CD4-positive, alpha-beta memory T cell (primary cell): ENCODE measurements at regions of chr11 and their contacts with region 1.

Region 1: GRCh38 chr11:72141066-72141465 is 5.5 kb downstream of the FOLR3 start:
- DNase-seq: no peak
- H3K4me3 ChIP-seq: no peak overlapping the region
- H3K4me3 Mint-ChIP-seq: no peak overlapping the region
- H3K27ac ChIP-seq: no peak overlapping the region
- H3K27ac Mint-ChIP-seq: peak overlapping the region in 1 of 7 donors; percentile 13
- H3K4me1 ChIP-seq: no peaks in the 10 kb centered on the region
- H3K4me1 Mint-ChIP-seq: peaks cover 2 to 14% (median 6%) of the 10 kb centered on the region in 4 donors
- H3K27me3 ChIP-seq: no peaks in the 10 kb centered on the region
- H3K27me3 Mint-ChIP-seq: peaks cover 0 to 6% of the 10 kb centered on the region in 2 donors

Region 2: DNA sequence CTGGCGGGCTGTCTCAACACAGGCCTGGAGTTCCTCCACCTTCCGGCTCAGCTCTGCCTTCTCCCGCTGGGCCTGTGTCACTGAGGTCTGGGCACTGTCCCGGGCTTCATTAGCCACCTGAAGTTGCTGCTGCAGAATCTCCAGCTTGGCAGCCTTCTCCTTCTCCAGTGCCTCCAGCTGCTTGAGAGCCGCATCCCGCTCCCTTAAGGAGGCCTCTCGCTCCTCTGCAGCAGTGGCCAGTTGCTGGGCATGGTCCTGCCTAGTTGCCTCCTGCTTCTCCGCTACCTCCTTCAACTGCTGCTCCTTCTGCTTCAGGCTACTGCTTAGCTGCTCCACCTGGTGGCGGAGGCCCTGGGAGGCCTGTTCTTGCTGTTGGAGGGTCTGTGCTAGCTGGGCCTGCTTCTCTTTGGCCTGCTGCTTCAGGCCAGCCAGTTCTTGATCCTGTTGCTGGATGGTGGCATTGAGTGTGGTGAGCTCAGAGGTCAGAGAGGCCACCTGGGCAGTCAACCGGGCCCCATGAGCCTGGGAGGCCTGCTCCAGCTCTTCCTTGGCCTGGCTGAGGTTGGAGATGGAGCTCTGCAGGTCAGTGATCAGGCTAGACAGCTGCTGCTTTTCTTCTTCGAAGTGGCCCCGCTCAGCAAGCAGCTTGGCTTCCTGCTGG is 125.4 kb before region 1 on chr11:
- CTCF ChIA-PET with region 1: interaction called, 188 read pairs
- POLR2A ChIA-PET with region 1: no interaction called
- intact Hi-C with region 1: no loop called
- DNase-seq: no peak
- H3K4me3 ChIP-seq: no peak overlapping the region
- H3K4me3 Mint-ChIP-seq: no peak overlapping the region
- H3K27ac ChIP-seq: no peak overlapping the region
- H3K27ac Mint-ChIP-seq: peak overlapping the region in 2 of 7 donors; percentile 53 to 65
- H3K4me1 ChIP-seq: no peaks in the 10 kb centered on the region
- H3K4me1 Mint-ChIP-seq: peaks cover 0 to 4% (median 2%) of the 10 kb centered on the region in 4 donors
- H3K27me3 ChIP-seq: no peaks in the 10 kb centered on the region
- H3K27me3 Mint-ChIP-seq: no peaks in the 10 kb centered on the region

Region 3: DNA sequence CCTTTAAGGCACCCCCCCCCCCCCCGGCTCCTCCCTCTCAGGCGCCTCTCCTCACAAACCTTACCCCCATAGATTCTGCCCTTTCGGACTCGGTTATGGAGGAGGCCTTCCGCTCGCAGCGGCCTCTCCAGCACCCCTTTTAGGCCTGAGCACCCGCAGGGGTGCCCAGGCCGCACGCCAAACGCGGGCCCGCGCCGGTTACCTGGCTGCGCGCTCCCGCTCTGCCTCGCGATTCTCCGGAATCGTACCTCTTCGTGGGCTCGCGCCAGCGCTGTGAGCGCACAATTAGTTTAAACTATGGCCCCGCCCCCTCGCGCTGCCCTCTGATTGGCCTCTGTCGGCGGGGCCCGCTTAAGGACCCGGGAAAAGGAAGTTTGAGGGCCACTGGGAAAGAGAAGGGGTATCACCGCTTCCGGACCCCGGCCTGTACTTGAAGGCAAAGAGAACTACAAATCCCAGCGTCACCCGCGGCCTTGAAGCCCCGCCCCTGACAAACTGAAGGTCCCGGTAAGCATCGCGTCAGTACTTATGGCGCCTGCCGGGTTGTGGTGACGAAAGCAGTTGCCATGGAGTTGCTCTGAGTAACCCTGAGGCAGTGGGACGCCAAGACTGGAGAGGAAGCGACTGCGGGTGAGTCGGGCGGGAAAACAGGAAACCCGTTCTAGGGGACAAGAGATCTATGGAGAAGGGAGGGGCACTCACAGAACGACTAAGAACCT is 60.7 kb before region 1 on chr11 and contains the starts of genes LRRC51 and NUMA1:
- CTCF ChIA-PET with region 1: interaction called, 3 read pairs
- POLR2A ChIA-PET with region 1: no interaction called
- intact Hi-C with region 1: loop called (anchors 1 kb)
- DNase-seq: peak; percentile 98 to 100 (median 99)
- H3K4me3 ChIP-seq: peak within 1 kb of the TSS; percentile 74 to 79
- H3K4me3 Mint-ChIP-seq: peak within 1 kb of the TSS; percentile 89 to 96 (median 93)
- H3K27ac ChIP-seq: peak within 1 kb of the TSS; percentile 75
- H3K27ac Mint-ChIP-seq: peak within 1 kb of the TSS; percentile 91 to 100 (median 99)
- H3K4me1 ChIP-seq: peaks cover 27% of the 10 kb centered on the region
- H3K4me1 Mint-ChIP-seq: peaks cover 31 to 53% (median 38%) of the 10 kb centered on the region in 4 donors
- H3K27me3 ChIP-seq: no peaks in the 10 kb centered on the region
- H3K27me3 Mint-ChIP-seq: no peaks in the 10 kb centered on the region
- total RNA-seq, gene LRRC51: 4.2 to 4.5 TPM
- total RNA-seq, gene NUMA1: 376 to 380 TPM

Region 4: DNA sequence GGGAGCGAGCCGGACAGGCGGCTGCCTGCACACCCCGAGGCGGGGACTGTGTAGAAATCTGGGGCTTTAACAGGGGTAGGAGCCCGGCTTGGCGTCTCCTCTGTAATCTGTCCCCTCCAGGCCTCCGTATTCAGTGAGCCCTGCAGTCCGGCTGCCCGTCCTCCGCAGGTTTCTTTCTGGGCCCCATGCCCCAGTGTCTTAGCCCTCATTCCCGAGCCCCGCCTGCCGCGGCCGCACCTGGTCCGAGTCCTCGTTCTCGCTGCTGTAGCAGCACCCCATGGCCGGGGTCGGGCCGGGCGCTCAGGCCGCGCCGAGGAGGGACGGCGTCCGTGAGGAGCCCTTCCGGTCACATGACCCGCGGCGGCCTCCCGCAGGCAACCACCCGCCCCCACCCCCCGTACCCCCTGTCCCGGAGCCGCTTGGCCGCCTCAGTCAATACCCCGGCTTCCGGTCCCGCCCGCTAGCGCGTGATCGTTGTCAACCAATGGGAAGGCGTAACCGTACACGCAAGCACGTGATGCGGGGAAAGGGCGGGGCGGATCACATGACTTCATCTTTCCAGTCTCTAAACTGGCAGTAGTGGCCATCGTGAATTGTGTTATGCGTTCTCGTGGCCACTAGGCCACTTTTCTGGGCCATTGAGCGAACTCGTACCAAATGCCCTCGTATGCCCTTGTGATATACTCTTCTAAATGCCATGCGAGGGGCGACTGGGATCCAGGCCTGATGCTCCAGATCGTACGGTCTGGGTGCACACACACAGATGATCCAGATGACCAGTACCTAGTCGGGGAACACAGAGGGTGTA is 37.9 kb before region 1 on chr11 and contains the start of gene LAMTOR1:
- CTCF ChIA-PET with region 1: interaction called, 12 read pairs
- POLR2A ChIA-PET with region 1: interaction called, 3 read pairs
- intact Hi-C with region 1: no loop called
- DNase-seq: peak; percentile 94 to 99 (median 95)
- H3K4me3 ChIP-seq: peak within 1 kb of the TSS; percentile 75 to 93
- H3K4me3 Mint-ChIP-seq: peak within 1 kb of the TSS; percentile 80 to 95 (median 86)
- H3K27ac ChIP-seq: peak within 1 kb of the TSS; percentile 90
- H3K27ac Mint-ChIP-seq: peak within 1 kb of the TSS; percentile 89 to 95 (median 95)
- H3K4me1 ChIP-seq: peaks cover 32% of the 10 kb centered on the region
- H3K4me1 Mint-ChIP-seq: peaks cover 28 to 47% (median 38%) of the 10 kb centered on the region in 4 donors
- H3K27me3 ChIP-seq: no peaks in the 10 kb centered on the region
- H3K27me3 Mint-ChIP-seq: no peaks in the 10 kb centered on the region
- total RNA-seq, gene LAMTOR1: 66.8 to 68.6 TPM

Region 5: DNA sequence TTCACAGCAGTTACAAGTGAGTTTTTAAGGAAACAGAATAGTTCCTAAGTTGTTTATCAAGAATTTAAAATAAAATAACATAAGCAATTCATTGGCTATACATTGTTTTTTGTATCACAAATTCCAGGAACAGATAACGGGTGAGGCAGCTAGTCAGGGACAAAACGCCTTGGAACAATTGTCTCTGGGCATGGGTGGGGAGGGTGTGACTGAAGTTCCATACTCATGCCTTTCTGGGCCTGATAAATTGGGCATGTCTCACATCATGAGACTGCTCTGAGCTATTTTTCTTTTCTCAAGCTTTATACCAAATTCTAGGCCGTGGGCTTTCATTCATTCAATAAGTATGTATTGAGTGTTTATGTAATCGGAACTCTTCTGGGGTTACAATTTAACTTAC is 16.1 kb after region 1 on chr11:
- CTCF ChIA-PET with region 1: interaction called, 22 read pairs
- POLR2A ChIA-PET with region 1: no interaction called
- intact Hi-C with region 1: no loop called
- DNase-seq: no peak
- H3K4me3 ChIP-seq: no peak overlapping the region
- H3K4me3 Mint-ChIP-seq: no peak overlapping the region
- H3K27ac ChIP-seq: no peak overlapping the region
- H3K27ac Mint-ChIP-seq: no peak overlapping the region
- H3K4me1 ChIP-seq: no peaks in the 10 kb centered on the region
- H3K4me1 Mint-ChIP-seq: no peaks in the 10 kb centered on the region
- H3K27me3 ChIP-seq: no peaks in the 10 kb centered on the region
- H3K27me3 Mint-ChIP-seq: peaks cover 12 to 22% of the 10 kb centered on the region in 2 donors